PC-3 (cell line): ENCODE measurements at regions of chrX and their contacts with region 1.

Region 1: GRCh38 chrX:15645258-15645657 is 19.3 kb downstream of the CLTRN start:
- DNase-seq: peak; percentile 12
- ATAC-seq: peak; percentile 54; the same call in 1 of the 2 replicates
- H3K4me3 ChIP-seq: no peak overlapping the region
- H3K27ac ChIP-seq: no peak overlapping the region
- H3K4me1 ChIP-seq: no peaks in the 10 kb centered on the region
- H3K27me3 ChIP-seq: no peaks in the 10 kb centered on the region
- CTCF ChIP-seq: peak; percentile 39; the same call in 1 of the 2 replicates

Region 2: DNA sequence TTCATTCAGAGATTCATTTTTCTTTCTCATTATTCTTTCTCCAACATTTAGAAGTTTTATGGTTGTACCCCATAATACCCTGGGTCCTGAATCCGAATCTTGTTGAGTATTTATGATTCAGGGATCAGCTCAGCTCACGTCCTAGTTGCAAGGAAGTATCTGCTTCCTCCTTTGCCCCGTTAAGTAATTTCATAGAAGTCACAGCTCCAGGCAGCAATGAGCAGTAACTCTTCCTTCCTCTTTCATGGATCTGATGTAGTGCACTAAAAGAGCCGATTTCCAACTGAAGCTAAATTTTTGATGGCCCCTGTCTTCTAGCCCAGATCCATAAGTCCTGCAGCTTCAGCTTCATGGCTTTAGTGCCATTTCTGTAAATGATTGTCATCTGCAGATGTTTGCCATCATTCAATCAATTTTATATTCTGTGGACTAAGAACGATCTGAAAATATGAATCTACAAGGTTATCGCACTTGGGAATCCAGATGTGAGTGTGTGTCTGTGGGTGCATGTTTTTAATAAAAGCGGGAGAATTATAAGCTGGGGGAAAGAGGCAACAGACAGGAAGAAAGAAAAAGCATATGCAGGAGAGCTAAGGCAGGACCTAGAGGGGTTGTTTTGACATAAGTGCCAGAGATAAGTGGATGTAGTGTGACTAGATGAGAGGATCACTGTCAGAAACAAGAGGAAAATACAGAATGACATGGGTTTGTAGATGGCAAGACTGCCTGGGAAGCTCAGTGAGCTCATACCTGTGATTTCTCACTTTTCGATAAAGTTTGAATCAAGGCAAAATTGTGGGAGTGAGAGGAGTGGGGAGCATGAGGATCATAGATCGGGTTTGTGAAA is 278.5 kb before region 1 on chrX:
- CTCF ChIA-PET with region 1: no interaction called
- POLR2A ChIA-PET with region 1: no interaction called
- intact Hi-C with region 1: no loop called
- DNase-seq: no peak
- ATAC-seq: no peak
- H3K4me3 ChIP-seq: no peak overlapping the region
- H3K27ac ChIP-seq: no peak overlapping the region
- H3K4me1 ChIP-seq: no peaks in the 10 kb centered on the region
- H3K27me3 ChIP-seq: no peaks in the 10 kb centered on the region
- CTCF ChIP-seq: no peak

Region 3: DNA sequence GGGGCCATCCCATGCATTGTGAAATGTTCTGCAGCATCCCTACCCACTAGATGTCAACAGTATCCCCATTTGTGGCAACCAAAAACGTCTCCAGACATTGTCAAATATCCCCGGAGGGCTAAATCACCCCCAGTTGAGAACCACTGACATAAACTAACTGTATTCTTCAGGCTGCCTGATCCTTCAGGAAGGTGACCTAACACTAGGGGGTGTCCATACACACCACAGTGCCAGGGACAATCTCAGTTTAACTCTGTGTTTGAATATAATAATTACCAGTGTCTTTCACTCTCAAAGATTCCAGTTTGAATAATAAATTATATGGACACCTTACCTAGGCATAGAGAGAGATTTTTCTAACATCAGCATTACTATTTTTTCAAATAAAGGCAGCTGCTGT is 50.9 kb before region 1 on chrX:
- CTCF ChIA-PET with region 1: no interaction called
- POLR2A ChIA-PET with region 1: no interaction called
- intact Hi-C with region 1: loop called (anchors 1 kb)
- DNase-seq: peak; percentile 41
- ATAC-seq: peak; percentile 81
- H3K4me3 ChIP-seq: no peak overlapping the region
- H3K27ac ChIP-seq: no peak overlapping the region
- H3K4me1 ChIP-seq: no peaks in the 10 kb centered on the region; the same call in 1 of the 2 replicates
- H3K27me3 ChIP-seq: no peaks in the 10 kb centered on the region
- CTCF ChIP-seq: peak; percentile 72

Region 4: DNA sequence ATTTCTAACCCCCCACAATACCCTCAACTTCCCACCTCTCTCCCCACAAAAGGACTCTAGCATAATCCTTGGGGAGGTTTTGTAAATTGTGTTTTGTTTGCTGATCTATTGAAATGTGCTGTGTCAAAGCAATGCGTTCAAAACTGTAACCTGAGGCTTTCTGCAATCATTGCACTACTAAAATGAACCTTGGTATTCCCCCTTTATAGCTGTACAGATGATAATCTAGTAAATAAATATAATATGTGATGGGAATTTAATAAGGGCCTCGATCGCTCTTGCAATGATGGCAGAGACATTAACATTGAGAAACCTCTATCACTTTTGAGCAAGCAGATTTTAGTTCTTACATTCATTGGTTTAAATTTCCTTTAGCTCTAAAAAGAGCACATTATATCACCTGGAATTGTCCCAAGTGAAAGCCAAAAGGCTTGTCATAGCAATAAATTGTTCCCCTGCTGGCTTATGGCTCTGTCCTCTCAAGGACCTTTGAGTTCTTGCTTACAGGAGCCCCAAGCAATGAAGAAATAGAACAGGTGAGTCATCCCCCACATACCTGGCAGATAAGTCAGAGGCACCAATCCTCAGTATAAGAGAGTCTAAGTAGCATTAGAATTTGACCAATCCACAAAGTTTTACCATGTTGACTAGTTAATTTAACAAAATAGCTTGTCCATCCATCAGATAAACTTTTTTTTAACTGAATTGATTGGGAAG is 26.0 kb before region 1 on chrX:
- CTCF ChIA-PET with region 1: interaction called, 3 read pairs
- POLR2A ChIA-PET with region 1: no interaction called
- intact Hi-C with region 1: loop called (anchors 2 kb)
- DNase-seq: peak; percentile 93
- ATAC-seq: peak; percentile 99
- H3K4me3 ChIP-seq: peak overlapping the region; percentile 39; the same call in 1 of the 2 replicates
- H3K27ac ChIP-seq: peak overlapping the region; percentile 73
- H3K4me1 ChIP-seq: peaks cover 30% of the 10 kb centered on the region
- H3K27me3 ChIP-seq: no peaks in the 10 kb centered on the region
- CTCF ChIP-seq: no peak

Region 5: GRCh38 chrX:15854712-15855567 is 209.7 kb after region 1 on chrX and contains the start of gene AP1S2:
- CTCF ChIA-PET with region 1: no interaction called
- POLR2A ChIA-PET with region 1: no interaction called
- intact Hi-C with region 1: no loop called
- DNase-seq: peak; percentile 93
- ATAC-seq: peak; percentile 92
- H3K4me3 ChIP-seq: peak within 1 kb of the TSS; percentile 80
- H3K27ac ChIP-seq: peak within 1 kb of the TSS; percentile 70
- H3K4me1 ChIP-seq: peaks cover 36% of the 10 kb centered on the region
- H3K27me3 ChIP-seq: no peaks in the 10 kb centered on the region
- CTCF ChIP-seq: no peak
- total RNA-seq, gene AP1S2: 28.2 and 28.3 TPM in 2 replicates

Region 6: GRCh38 chrX:16005917-16006316 is 360.7 kb after region 1 on chrX:
- CTCF ChIA-PET with region 1: no interaction called
- POLR2A ChIA-PET with region 1: no interaction called
- intact Hi-C with region 1: no loop called
- DNase-seq: no peak
- ATAC-seq: no peak
- H3K4me3 ChIP-seq: no peak overlapping the region
- H3K27ac ChIP-seq: no peak overlapping the region
- H3K4me1 ChIP-seq: peaks cover 6% of the 10 kb centered on the region
- H3K27me3 ChIP-seq: no peaks in the 10 kb centered on the region
- CTCF ChIP-seq: no peak